A673 (cell line): ENCODE measurements at regions of chr17 and their contacts with region 1.

Region 1: DNA sequence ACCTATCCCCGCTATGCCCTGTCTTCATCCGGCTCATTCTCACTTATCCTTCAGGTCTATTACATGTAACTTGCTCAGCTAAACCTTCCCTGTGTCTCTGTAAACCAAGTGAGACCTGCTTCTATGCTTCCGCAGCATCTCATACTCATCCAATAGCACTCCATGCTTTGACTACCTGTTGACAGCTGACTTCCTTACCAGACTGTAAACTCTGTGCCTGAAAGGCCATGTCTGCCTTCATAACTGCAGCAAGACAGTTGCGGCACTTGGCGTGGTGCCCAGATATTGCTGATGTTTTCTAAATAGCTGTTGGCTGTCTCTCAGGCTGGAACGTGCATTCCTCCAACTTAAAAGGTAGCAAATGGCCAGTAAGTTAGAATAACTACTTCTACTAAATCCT is 1.8 kb upstream of the OR1E1 start:
- DNase-seq: peak; percentile 5
- H3K4me3 ChIP-seq: no peak overlapping the region
- H3K27ac ChIP-seq: no peak overlapping the region
- H3K4me1 ChIP-seq: no peaks in the 10 kb centered on the region
- H3K27me3 ChIP-seq: no peaks in the 10 kb centered on the region
- CTCF ChIP-seq: no peak

Region 2: GRCh38 chr17:3213587-3213986 is 186.5 kb before region 1 on chr17:
- CTCF ChIA-PET with region 1: no interaction called
- POLR2A ChIA-PET with region 1: no interaction called
- intact Hi-C with region 1: no loop called
- DNase-seq: no peak
- H3K4me3 ChIP-seq: no peak overlapping the region
- H3K27ac ChIP-seq: no peak overlapping the region
- H3K4me1 ChIP-seq: no peaks in the 10 kb centered on the region
- H3K27me3 ChIP-seq: peaks cover 9% of the 10 kb centered on the region
- CTCF ChIP-seq: no peak

Region 3: DNA sequence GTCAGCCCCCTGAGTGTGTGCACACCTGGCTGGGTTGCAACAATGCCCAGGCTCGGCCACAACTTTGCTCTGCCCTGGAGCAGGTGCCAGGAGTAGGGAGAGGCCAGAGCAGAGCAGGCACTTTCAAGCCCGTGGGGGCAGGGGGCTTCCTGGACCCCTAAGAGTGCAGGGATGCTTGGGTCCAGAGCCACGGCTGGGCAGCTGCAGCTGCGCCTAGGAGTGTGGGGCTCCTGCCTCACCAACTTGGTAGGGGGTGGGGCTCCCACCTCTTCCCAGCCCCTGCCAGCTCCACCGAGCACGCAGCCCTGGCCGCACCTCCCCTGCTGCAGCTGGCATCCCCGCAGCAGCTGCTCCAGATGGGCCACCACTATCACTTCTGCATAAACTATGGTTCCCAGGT is 21.7 kb before region 1 on chr17:
- CTCF ChIA-PET with region 1: no interaction called
- POLR2A ChIA-PET with region 1: interaction called, 23 read pairs
- intact Hi-C with region 1: no loop called
- DNase-seq: no peak
- H3K4me3 ChIP-seq: no peak overlapping the region
- H3K27ac ChIP-seq: no peak overlapping the region
- H3K4me1 ChIP-seq: no peaks in the 10 kb centered on the region
- H3K27me3 ChIP-seq: peaks cover 9% of the 10 kb centered on the region
- CTCF ChIP-seq: no peak

Region 4: GRCh38 chr17:3502466-3502865 is 102.4 kb after region 1 on chr17:
- CTCF ChIA-PET with region 1: no interaction called
- POLR2A ChIA-PET with region 1: no interaction called
- intact Hi-C with region 1: no loop called
- DNase-seq: no peak
- H3K4me3 ChIP-seq: no peak overlapping the region
- H3K27ac ChIP-seq: no peak overlapping the region
- H3K4me1 ChIP-seq: no peaks in the 10 kb centered on the region
- H3K27me3 ChIP-seq: no peaks in the 10 kb centered on the region
- CTCF ChIP-seq: no peak